GM12878 (cell line): ENCODE measurements at regions of chr6 and their contacts with region 1.

Region 1: GRCh38 chr6:73329201-73329600 is 24.9 kb downstream of the DPPA5 start:
- DNase-seq: no peak
- ATAC-seq: peak; percentile 69
- H3K4me3 ChIP-seq: no peak overlapping the region
- H3K27ac ChIP-seq: no peak overlapping the region
- H3K4me1 ChIP-seq: peaks cover 4% of the 10 kb centered on the region; the same call in 1 of the 2 replicates
- H3K27me3 ChIP-seq: no peaks in the 10 kb centered on the region
- CTCF ChIP-seq: no peak
- EP300 ChIP-seq: no peak
- POLR2A ChIP-seq: no peak
- RAD21 ChIP-seq: no peak

Region 2: DNA sequence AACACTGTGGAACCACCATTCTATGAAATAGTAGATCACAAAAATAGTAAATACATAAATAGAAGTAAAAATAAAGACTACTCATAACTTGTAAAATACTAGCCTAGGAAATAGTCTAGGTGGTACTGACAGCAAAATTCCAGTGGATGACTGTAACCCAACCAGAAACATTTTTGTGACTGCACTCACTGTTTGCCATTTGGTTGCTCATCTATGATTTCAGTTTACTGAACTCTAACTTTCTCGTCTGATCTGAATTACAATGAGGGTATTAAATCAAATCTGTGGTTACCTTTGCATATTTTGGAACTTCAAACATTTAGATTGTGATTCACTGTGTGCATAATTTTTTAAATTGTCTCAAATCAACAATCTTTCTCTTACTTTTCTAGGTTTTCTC is 255.0 kb before region 1 on chr6:
- CTCF ChIA-PET with region 1: no interaction called
- POLR2A ChIA-PET with region 1: no interaction called
- RAD21 ChIA-PET with region 1: no interaction called
- SMC1A ChIA-PET with region 1: no interaction called
- in situ Hi-C with region 1: no loop called
- intact Hi-C with region 1: no loop called
- DNase-seq: no peak
- ATAC-seq: no peak
- H3K4me3 ChIP-seq: no peak overlapping the region
- H3K27ac ChIP-seq: no peak overlapping the region
- H3K4me1 ChIP-seq: no peaks in the 10 kb centered on the region
- H3K27me3 ChIP-seq: no peaks in the 10 kb centered on the region
- CTCF ChIP-seq: no peak
- EP300 ChIP-seq: no peak
- POLR2A ChIP-seq: no peak
- RAD21 ChIP-seq: no peak

Region 3: DNA sequence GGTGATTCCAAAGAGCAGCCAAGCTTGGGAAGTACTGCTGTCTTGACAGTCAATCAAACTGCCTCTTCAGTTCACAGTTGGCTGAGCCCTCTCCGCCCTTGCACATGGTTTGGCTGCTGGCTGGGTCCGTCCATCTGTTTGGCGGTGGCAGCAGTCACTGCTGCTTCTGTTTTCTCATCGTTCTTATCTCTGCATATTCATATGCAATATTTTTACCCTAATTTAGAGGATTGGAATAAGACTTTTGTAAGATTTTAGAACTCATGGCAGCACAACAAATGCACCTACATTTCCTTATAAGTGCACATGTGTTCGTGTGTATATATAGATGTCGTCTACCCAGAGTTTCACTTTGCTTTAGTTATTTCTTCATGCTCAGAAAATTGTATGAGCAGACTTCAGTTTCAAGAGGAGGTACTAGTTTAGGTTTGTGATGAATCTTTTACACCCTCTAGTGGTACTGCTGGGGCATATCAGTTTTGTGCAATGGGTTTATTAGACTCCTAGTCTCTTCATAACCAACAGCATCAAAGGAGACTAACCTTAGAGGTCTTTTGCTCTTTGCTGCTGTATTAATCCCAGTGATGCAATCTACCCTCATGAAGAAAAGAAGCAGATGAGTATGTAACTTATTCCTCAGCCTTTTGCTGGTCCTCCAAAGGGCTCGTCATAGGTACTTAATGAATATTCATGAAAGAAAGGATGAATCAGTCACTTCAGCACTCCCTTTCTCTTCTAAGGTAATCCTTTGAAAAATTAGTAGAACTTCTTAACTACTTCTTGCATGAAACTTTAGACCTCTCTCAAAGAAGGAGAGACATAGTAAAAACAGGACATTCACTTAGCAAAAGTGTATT is 148.2 kb before region 1 on chr6:
- CTCF ChIA-PET with region 1: interaction called, 4 read pairs
- POLR2A ChIA-PET with region 1: no interaction called
- RAD21 ChIA-PET with region 1: no interaction called
- SMC1A ChIA-PET with region 1: interaction called, 4 read pairs
- in situ Hi-C with region 1: no loop called
- intact Hi-C with region 1: loop called (anchors 2 kb)
- DNase-seq: peak; percentile 53
- ATAC-seq: peak; percentile 94
- H3K4me3 ChIP-seq: peak overlapping the region; percentile 25; the same call in 1 of the 2 replicates
- H3K27ac ChIP-seq: no peak overlapping the region
- H3K4me1 ChIP-seq: peaks cover 23% of the 10 kb centered on the region
- H3K27me3 ChIP-seq: no peaks in the 10 kb centered on the region
- CTCF ChIP-seq: peak; percentile 79 to 91 (median 85)
- EP300 ChIP-seq: no peak
- POLR2A ChIP-seq: no peak
- RAD21 ChIP-seq: peak; percentile 97

Region 4: GRCh38 chr6:73262671-73263569 is 66.3 kb before region 1 on chr6 and contains the start of gene KHDC1:
- CTCF ChIA-PET with region 1: interaction called, 10 read pairs
- POLR2A ChIA-PET with region 1: no interaction called
- RAD21 ChIA-PET with region 1: no interaction called
- SMC1A ChIA-PET with region 1: interaction called, 4 read pairs
- in situ Hi-C with region 1: no loop called
- intact Hi-C with region 1: no loop called
- DNase-seq: no peak
- ATAC-seq: peak; percentile 92
- H3K4me3 ChIP-seq: peak within 1 kb of the TSS; percentile 99
- H3K27ac ChIP-seq: peak within 1 kb of the TSS; percentile 74
- H3K4me1 ChIP-seq: peaks cover 10% of the 10 kb centered on the region
- H3K27me3 ChIP-seq: no peaks in the 10 kb centered on the region
- CTCF ChIP-seq: peak in 2 of 3 experiments; percentile 15 to 26; a peak in 1 of 6 replicates
- EP300 ChIP-seq: no peak
- POLR2A ChIP-seq: no peak; the same call in none of the 2 replicates
- RAD21 ChIP-seq: no peak
- polyA plus RNA-seq, gene KHDC1: 7.6 to 8.7 TPM

Region 5: GRCh38 chr6:73285674-73286283 is 43.4 kb before region 1 on chr6:
- CTCF ChIA-PET with region 1: interaction called, 86 read pairs
- POLR2A ChIA-PET with region 1: no interaction called
- RAD21 ChIA-PET with region 1: interaction called, 25 read pairs
- SMC1A ChIA-PET with region 1: interaction called, 22 read pairs
- in situ Hi-C with region 1: no loop called
- intact Hi-C with region 1: loop called (anchors 1 kb)
- DNase-seq: no peak
- ATAC-seq: peak; percentile 48; the same call in 2 of the 3 replicates
- H3K4me3 ChIP-seq: no peak overlapping the region
- H3K27ac ChIP-seq: no peak overlapping the region
- H3K4me1 ChIP-seq: no peaks in the 10 kb centered on the region; the same call in 1 of the 2 replicates
- H3K27me3 ChIP-seq: no peaks in the 10 kb centered on the region
- CTCF ChIP-seq: peak; percentile 17 to 38 (median 25); a peak in 3 of 6 replicates
- EP300 ChIP-seq: no peak
- POLR2A ChIP-seq: no peak
- RAD21 ChIP-seq: peak; percentile 50

Region 6: GRCh38 chr6:73339347-73339746 is 10.1 kb after region 1 on chr6:
- CTCF ChIA-PET with region 1: interaction called, 10 read pairs
- POLR2A ChIA-PET with region 1: no interaction called
- RAD21 ChIA-PET with region 1: interaction called, 3 read pairs
- SMC1A ChIA-PET with region 1: interaction called, 5 read pairs
- in situ Hi-C with region 1: no loop called
- intact Hi-C with region 1: no loop called
- DNase-seq: no peak
- ATAC-seq: no peak; the same call in 2 of the 3 replicates
- H3K4me3 ChIP-seq: no peak overlapping the region
- H3K27ac ChIP-seq: no peak overlapping the region
- H3K4me1 ChIP-seq: no peaks in the 10 kb centered on the region
- H3K27me3 ChIP-seq: no peaks in the 10 kb centered on the region
- CTCF ChIP-seq: no peak
- EP300 ChIP-seq: no peak
- POLR2A ChIP-seq: no peak
- RAD21 ChIP-seq: no peak

Region 7: GRCh38 chr6:73388800-73389512 is 59.8 kb after region 1 on chr6:
- CTCF ChIA-PET with region 1: interaction called, 16 read pairs
- POLR2A ChIA-PET with region 1: no interaction called
- RAD21 ChIA-PET with region 1: interaction called, 22 read pairs
- SMC1A ChIA-PET with region 1: interaction called, 4 read pairs
- in situ Hi-C with region 1: no loop called
- intact Hi-C with region 1: loop called (anchors 1 kb)
- DNase-seq: no peak
- ATAC-seq: peak; percentile 92
- H3K4me3 ChIP-seq: peak overlapping the region; percentile 51
- H3K27ac ChIP-seq: no peak overlapping the region
- H3K4me1 ChIP-seq: no peaks in the 10 kb centered on the region
- H3K27me3 ChIP-seq: no peaks in the 10 kb centered on the region
- CTCF ChIP-seq: peak; percentile 60 to 80 (median 65)
- EP300 ChIP-seq: no peak
- POLR2A ChIP-seq: peak; percentile 33; the same call in 1 of the 2 replicates
- RAD21 ChIP-seq: peak; percentile 65